Heart right ventricle (tissue), 16 donors: ENCODE measurements at regions of chr1 and their contacts with region 1.

Region 1: DNA sequence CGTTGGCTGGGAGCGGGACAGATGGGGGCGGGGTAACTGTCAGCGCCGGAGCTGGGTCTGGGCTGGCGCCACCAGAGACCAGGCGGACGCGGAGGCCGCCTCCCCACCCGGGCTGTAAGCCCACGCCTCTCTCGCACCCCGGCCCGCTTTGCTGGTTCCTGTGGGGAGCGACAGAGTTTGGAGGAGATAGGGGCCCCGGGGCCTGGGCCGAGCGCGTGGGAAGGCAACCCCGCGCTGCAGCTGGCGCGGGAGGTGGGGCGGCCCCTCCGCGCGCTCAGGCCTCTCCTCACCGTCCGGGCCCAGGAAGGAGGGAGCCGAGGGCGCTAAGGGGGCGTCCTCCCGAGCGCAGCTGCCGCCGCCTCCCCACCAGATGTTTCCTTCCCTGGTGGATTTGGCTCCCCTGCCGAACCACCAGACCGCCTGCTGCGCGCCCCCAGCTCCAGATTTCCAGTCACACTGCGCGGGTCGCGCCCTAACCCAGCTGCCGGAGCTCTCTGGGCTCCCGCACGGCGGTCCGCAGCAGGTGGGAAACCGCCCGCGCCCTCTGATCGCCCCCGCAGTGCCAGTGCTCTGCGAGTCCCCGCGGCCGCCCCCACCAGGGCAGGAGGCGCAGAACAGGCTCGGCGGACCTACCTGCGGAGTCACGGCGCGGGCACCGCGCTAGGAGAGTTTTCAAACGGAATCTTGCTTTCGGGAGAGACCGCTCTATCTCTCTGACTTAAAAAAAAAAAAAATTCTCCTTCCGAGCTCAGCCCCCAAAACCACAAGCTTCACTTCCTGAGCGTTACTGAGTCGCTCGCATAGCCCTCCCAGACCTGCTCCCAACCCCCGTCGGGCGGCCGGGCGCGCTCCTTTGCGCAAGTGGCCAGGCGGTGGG is 1.1 kb downstream of the GFI1 start:
- DNase-seq: peak in 1 of 2 donors; percentile 24
- ATAC-seq: peak; percentile 17 to 70 (median 38)
- H3K4me3 ChIP-seq: peak overlapping the region; percentile 40 to 70 (median 56)
- H3K27ac ChIP-seq: peak overlapping the region in 1 of 10 donors; percentile 84
- H3K4me1 ChIP-seq: peaks cover 30 to 64% (median 58%) of the 10 kb centered on the region in 9 donors
- H3K27me3 ChIP-seq: peaks cover 41 to 89% (median 80%) of the 10 kb centered on the region in 7 donors
- CTCF ChIP-seq: peak in 3 of 9 donors; percentile 26 to 43 (median 29)

Region 2: DNA sequence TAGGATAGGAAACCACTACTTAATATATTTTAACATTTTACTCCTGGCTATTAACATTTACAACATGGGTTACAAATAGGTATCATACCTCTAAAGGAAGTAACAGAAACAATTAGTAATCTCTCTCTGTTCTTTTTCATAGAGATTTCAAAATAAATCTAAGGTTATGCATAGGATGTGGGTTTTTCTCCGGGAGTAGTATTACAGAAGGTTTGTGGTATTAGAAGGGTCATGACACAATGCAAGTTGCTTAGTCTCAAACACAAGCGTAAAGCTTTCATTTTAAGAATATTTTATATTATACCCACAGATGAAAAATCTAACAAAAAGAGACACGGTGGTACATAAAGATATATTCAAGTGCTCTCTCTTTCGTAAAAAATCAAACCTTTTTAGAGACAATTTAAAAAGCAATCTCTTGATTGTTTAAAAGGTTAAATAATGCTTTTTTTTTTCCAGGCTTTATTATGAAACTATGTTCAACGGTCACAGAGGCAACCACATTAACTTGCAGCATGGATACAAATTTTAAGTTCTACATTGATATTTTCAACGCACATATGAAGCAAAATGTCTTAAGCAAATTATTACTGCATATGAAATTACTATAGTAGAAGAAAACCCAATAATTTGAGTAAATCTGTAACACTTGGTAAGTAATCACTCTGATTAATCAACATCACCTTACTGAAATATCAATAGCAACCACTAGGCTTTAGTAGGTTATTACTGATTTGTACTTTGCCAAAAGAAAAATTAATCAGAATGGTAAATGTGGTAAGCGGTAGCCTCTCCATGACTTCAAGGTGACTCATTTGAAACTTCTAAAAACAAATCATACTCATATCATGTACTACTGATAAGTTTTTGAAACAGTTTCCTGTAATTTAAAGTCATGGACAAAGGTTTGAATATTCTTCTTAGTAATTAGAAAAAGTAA is 98.5 kb after region 1 on chr1:
- intact Hi-C with region 1: loop called in 1 of 10 experiments (anchors 10 kb)
- DNase-seq: no peak
- ATAC-seq: no peak
- H3K4me3 ChIP-seq: no peak overlapping the region
- H3K27ac ChIP-seq: peak overlapping the region in 1 of 10 donors; percentile 67
- H3K4me1 ChIP-seq: peaks cover 0 to 32% (median 0%) of the 10 kb centered on the region in 9 donors
- H3K27me3 ChIP-seq: no peaks in the 10 kb centered on the region
- CTCF ChIP-seq: no peak